ENCODE measurements at regions of chr4 and their contacts with region 1.

Region 1: GRCh38 chr4:173307778-173308177 is 26.4 kb downstream of the HMGB2 start:
- DNase-seq: no peak
- H3K4me3 ChIP-seq: no peak overlapping the region
- H3K27ac ChIP-seq: no peak overlapping the region
- H3K4me1 ChIP-seq: no peaks in the 10 kb centered on the region; a peak in 1 of 7 replicates
- H3K27me3 ChIP-seq: no peaks in the 10 kb centered on the region
- CTCF ChIP-seq: peak in 2 of 3 experiments; percentile 4 to 14; a peak in 2 of 4 replicates
- EP300 ChIP-seq: no peak
- POLR2A ChIP-seq: no peak
- RAD21 ChIP-seq: no peak

Region 2: GRCh38 chr4:172787111-172787510 is 520.7 kb before region 1 on chr4:
- CTCF ChIA-PET with region 1: no interaction called
- POLR2A ChIA-PET with region 1: no interaction called
- DNase-seq: no peak
- H3K4me3 ChIP-seq: no peak overlapping the region
- H3K27ac ChIP-seq: no peak overlapping the region
- H3K4me1 ChIP-seq: no peaks in the 10 kb centered on the region
- H3K27me3 ChIP-seq: no peaks in the 10 kb centered on the region
- CTCF ChIP-seq: no peak
- EP300 ChIP-seq: no peak
- POLR2A ChIP-seq: no peak
- RAD21 ChIP-seq: no peak

Region 3: DNA sequence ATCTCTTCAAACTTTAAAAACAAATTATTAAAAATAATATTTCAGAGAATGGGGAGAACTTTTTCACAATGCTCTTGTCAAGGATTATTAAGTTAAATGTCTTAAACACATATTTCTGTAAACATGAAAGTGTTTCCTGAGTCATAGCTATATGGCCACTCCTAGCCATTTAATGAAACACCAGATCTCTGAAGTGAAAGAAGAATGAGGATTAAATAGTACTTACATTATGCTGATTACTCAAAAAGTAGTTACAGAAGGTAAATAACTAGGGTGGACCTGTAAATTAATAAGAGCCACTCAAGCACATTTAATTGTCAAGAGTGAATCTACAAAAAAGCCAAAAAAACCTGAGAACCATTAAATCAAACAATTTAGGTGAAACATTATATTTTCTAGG is 196.7 kb before region 1 on chr4:
- CTCF ChIA-PET with region 1: no interaction called
- POLR2A ChIA-PET with region 1: no interaction called
- DNase-seq: no peak
- H3K4me3 ChIP-seq: no peak overlapping the region
- H3K27ac ChIP-seq: no peak overlapping the region
- H3K4me1 ChIP-seq: peaks cover 0 to 3% (median 0%) of the 10 kb centered on the region in 4 experiments; a peak in 1 of 7 replicates
- H3K27me3 ChIP-seq: no peaks in the 10 kb centered on the region
- CTCF ChIP-seq: no peak
- EP300 ChIP-seq: no peak
- POLR2A ChIP-seq: no peak
- RAD21 ChIP-seq: no peak

Region 4: DNA sequence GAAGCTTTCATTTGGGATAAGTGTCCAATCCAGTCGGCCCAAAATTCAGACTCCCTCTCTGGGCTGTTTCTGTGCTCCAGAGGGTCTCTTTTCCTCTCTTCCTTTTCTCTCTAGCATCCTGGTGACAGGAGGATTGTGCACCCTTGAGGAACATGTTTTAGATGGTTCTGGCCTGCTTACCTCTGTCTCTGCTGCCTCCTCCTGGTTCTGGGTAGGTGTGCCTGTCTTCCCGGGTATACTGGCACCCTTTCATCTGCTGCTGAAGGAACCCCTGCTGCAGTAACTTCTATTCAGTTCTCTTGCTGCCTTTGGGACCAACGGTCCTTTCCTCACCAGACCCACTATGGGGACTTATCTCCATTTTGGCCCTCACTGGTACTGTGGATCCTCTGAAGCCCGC is 26.8 kb before region 1 on chr4:
- CTCF ChIA-PET with region 1: interaction called, 33 read pairs
- POLR2A ChIA-PET with region 1: no interaction called
- DNase-seq: no peak
- H3K4me3 ChIP-seq: no peak overlapping the region
- H3K27ac ChIP-seq: no peak overlapping the region
- H3K4me1 ChIP-seq: no peaks in the 10 kb centered on the region
- H3K27me3 ChIP-seq: no peaks in the 10 kb centered on the region
- CTCF ChIP-seq: peak; percentile 21 to 42 (median 36); a peak in 3 of 4 replicates
- EP300 ChIP-seq: no peak
- POLR2A ChIP-seq: no peak
- RAD21 ChIP-seq: peak; percentile 41 to 50

Region 5: DNA sequence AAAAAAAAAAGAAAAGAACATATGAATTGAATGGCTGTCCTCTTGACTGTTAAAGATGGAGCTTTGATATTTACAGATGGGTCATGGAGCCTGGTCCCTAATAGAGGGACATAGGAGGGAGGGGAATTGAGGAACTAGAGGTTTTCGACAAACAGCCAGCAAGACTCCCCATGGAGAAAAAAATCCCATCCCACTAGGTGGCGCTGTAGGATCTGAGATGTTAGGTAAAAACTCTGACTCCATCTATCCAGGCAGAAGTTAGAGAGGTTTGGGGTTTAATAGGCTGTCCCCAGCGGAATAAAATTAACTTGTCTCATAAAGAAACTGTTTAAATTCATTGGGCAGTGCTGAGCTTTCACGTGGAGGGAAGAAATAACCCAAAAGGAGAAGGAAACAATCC is 19.5 kb before region 1 on chr4:
- CTCF ChIA-PET with region 1: interaction called, 33 read pairs
- POLR2A ChIA-PET with region 1: no interaction called
- DNase-seq: peak; percentile 31 to 91
- H3K4me3 ChIP-seq: no peak overlapping the region
- H3K27ac ChIP-seq: no peak overlapping the region
- H3K4me1 ChIP-seq: 0 out of 7 replicates have a peak, but pooled peaks cover 0 to 1% (median 0%) of the 10 kb centered on the region in 4 experiments
- H3K27me3 ChIP-seq: peaks cover 0 to 1% (median 0%) of the 10 kb centered on the region in 4 experiments; a peak in 1 of 7 replicates
- CTCF ChIP-seq: peak; percentile 19 to 73 (median 68)
- EP300 ChIP-seq: no peak
- POLR2A ChIP-seq: no peak
- RAD21 ChIP-seq: peak; percentile 66 to 72

Region 6: DNA sequence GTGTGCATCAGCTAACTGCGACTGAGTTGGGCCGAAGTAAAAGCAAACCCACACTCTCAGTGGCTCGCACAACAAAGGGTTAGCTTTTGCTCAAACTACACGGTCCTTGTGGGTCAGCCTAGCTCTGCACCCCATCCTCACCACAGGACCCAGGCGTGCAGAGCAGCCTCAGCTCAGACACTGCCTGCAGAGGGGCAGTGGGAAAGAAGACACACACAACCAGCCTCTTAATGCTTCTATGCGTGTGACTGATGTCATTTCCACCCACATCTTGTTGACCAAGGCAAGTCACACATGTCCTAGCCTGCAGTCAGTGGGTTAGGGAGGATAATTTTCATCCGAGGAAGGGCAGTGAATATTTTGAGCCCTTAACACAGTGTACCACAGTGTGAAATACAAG is 14.1 kb before region 1 on chr4:
- CTCF ChIA-PET with region 1: interaction called, 44 read pairs
- POLR2A ChIA-PET with region 1: no interaction called
- DNase-seq: no peak
- H3K4me3 ChIP-seq: no peak overlapping the region
- H3K27ac ChIP-seq: no peak overlapping the region
- H3K4me1 ChIP-seq: 0 out of 7 replicates have a peak, but pooled peaks cover 0 to 1% (median 0%) of the 10 kb centered on the region in 4 experiments
- H3K27me3 ChIP-seq: no peaks in the 10 kb centered on the region
- CTCF ChIP-seq: no peak
- EP300 ChIP-seq: no peak
- POLR2A ChIP-seq: no peak
- RAD21 ChIP-seq: no peak

Region 7: GRCh38 chr4:173318648-173319211 is 11.0 kb after region 1 on chr4:
- CTCF ChIA-PET with region 1: interaction called, 38 read pairs
- POLR2A ChIA-PET with region 1: interaction called, 4 read pairs
- DNase-seq: no peak
- H3K4me3 ChIP-seq: peak overlapping the region in 1 of 4 experiments; percentile 29; a peak in 1 of 8 replicates
- H3K27ac ChIP-seq: no peak overlapping the region
- H3K4me1 ChIP-seq: peaks cover 0 to 4% (median 3%) of the 10 kb centered on the region in 4 experiments; a peak in 4 of 7 replicates
- H3K27me3 ChIP-seq: no peaks in the 10 kb centered on the region
- CTCF ChIP-seq: no peak
- EP300 ChIP-seq: no peak
- POLR2A ChIP-seq: no peak
- RAD21 ChIP-seq: no peak

Measured in H1 (cell line).